ENCODE measurements at regions of chr1 and their contacts with region 1.

Region 1: DNA sequence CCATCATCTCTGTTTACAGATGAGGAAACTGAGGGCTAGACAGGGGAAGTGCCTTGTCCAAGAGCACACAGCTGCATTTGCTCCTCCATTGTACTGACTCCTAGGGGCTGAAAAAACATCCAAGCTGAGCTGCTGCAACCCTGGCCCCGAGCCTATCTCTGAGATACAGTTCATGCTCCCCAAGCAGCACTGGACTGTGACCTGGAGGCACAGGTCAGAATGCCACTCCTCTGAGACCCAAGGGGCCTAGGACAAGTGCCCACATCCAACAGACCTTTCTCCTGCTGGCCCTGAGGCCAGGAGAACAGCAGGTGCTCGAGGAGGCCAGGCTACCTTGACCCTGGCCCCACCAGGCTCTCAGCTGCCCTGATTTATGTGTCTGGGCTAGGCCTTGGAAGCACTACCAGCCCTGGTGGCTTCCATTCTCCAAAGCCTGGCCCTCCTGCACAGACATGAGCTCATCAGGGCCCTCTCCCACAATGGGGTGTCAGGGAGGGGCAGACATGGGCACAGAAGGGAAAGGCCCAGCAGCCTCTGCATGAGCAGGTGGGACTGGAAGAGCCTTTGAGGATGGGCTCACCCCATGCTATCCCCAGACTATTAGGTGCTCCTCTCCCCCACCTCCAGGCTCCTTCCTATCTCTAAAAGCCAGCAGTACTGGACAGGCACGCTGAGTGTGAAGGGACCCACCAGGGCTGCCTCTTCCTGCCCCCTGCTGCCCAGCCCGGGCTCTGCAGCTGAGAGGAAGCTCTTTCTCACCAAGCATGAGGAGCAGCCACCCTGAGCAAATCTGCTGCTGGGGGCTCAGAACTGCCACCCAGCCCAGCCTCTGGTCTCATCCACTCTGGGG is 18.8 kb downstream of the ADGRB2 start:
- DNase-seq: peak; percentile 76
- H3K4me3 Mint-ChIP-seq: no peak overlapping the region
- H3K27ac Mint-ChIP-seq: no peak overlapping the region
- H3K4me1 Mint-ChIP-seq: peaks cover 4% of the 10 kb centered on the region
- H3K27me3 Mint-ChIP-seq: peaks cover 37% of the 10 kb centered on the region

Region 2: DNA sequence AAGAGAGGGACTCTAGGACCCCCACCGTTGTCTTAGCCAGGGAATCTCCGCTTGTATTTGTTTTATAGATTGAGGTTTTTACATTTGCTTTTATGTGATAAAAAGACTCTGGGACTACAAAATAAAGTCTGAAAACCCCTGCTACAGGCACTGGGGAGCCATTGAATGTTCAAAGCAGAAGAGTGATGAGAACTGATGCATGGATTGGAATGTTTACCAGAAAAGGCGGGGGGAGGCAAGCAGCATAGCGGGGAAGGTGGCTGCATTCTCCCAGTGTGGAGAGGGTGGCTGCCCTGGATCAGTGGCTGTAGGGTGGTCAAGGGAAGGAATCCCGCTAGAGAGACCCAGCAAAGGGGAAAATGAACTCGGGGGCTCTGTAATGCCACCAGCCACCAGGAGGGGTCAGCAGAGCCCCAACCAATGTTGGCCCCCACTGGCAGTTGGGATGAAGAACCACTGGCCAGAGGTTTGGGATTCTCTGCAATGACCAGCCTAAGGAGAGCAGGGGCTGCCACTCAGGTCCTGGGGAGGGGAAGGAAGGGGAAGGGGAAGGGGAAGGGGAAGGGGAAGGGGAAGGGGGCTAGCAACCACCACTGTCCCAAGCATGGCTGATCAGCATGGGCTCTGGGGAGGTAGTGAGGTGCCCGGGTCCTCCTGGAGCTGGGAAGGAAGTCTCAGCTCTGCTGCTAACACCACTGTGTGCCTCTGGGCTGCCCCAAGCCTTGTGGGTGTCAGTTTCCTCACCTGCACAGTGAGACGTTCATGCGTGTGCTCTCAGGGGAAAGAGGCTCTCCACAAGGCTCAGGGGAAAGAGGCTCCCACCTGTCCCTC is 81.5 kb before region 1 on chr1:
- CTCF ChIA-PET with region 1: interaction called, 20 read pairs
- DNase-seq: peak; percentile 61
- H3K4me3 Mint-ChIP-seq: no peak overlapping the region
- H3K27ac Mint-ChIP-seq: no peak overlapping the region
- H3K4me1 Mint-ChIP-seq: no peaks in the 10 kb centered on the region
- H3K27me3 Mint-ChIP-seq: peaks cover 44% of the 10 kb centered on the region

Region 3: GRCh38 chr1:31715087-31715872 is 30.0 kb before region 1 on chr1:
- CTCF ChIA-PET with region 1: interaction called, 13 read pairs
- DNase-seq: peak; percentile 50
- H3K4me3 Mint-ChIP-seq: no peak overlapping the region
- H3K27ac Mint-ChIP-seq: no peak overlapping the region
- H3K4me1 Mint-ChIP-seq: peaks cover 13% of the 10 kb centered on the region
- H3K27me3 Mint-ChIP-seq: peaks cover 82% of the 10 kb centered on the region